Activated T-helper 2 cell treated with anti-CD3 and anti-CD28 coated beads, Interferon-gamma antibody, Interleukin-2, Interleukin-4, amounts not matched to agents 10 μg/mL and 5 μg/mL and 100 μg/mL, durations not matched to agents 14 hours and 24 hours and 36 hours (primary cell): ENCODE measurements at regions of chr2 and their contacts with region 1.

Region 1: DNA sequence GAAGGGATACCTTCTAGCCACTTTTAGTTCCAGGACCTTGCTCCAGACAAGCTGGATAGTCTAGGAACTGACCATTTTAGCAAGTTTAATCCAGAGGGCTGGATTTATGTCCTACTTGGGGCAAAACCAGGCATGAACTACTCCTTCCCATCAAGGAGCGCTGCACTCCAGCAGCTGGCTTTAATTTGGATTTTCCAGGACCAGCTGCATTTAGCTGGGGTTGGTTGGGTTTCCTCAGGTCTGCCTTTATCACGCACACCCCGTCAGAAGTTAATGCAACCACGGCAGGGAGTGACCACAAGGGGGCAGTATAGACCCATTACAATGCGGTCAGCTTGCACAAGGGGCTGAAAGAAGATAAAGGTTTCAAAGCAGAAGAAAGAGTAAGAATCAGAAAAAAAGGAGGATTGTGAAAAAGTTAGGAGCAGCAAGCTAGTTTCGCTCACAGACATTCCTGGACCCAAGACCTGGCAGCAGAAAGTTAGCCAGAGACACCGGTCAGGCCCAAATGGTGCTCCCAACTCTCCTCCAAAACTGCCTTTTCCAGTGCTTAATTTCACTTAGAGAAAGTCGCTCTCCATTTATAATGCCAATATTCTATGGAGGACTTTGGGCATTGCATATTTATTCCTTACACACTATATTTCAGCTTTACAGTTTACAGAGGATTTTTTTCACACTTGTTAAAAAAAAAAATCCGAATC is 40.1 kb downstream of the SLC4A1AP start:
- DNase-seq: peak; percentile 77
- H3K4me3 Mint-ChIP-seq: no peak overlapping the region
- H3K27ac Mint-ChIP-seq: no peak overlapping the region
- H3K4me1 Mint-ChIP-seq: peaks cover 25% of the 10 kb centered on the region
- H3K27me3 Mint-ChIP-seq: no peaks in the 10 kb centered on the region

Region 2: DNA sequence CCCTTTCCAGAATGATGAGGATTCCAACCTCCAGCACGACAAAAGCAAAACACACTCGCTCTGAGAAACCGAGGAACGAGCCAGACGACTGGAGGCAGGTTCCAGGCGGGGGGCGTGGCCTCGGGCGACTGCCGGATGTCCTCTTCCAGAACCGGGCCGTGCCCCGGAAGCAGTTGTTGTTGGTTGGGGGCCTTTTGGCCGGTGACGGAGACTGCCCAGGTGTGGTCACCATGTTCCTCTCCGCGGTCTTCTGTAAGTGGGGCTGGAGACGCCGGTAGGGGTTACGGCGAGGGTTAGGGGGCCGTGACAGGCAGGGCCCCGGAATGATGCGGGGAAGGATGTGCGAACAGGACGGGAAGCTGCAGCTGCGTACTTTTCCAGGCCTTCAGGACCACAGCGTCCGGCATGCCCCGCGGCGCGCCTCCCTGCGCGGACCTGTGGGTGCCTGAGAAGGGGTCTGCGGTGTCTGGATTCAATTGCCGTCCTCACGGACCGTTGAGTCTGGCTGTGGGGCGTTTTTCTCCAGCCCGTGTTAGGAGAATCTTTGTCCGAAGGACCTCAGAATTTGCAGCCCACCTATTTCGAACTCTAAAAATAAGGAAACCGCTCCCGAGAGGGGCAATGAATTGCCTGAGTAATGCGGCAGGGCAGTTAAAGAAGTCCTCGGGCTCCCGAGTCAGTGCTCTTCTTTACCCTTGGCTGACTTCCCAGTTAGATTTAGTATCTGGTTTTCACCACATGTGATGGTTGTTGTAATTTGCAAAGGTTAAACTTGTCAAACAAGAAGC is 68.0 kb after region 1 on chr2 and contains the start of gene MRPL33:
- intact Hi-C with region 1: loop called (anchors 5 kb)
- DNase-seq: peak; percentile 85
- H3K4me3 Mint-ChIP-seq: peak within 1 kb of the TSS; percentile 95
- H3K27ac Mint-ChIP-seq: peak within 1 kb of the TSS; percentile 92
- H3K4me1 Mint-ChIP-seq: peaks cover 28% of the 10 kb centered on the region
- H3K27me3 Mint-ChIP-seq: no peaks in the 10 kb centered on the region
- total RNA-seq, gene MRPL33: 57.7 and 58.9 TPM in 2 replicates

Region 3: DNA sequence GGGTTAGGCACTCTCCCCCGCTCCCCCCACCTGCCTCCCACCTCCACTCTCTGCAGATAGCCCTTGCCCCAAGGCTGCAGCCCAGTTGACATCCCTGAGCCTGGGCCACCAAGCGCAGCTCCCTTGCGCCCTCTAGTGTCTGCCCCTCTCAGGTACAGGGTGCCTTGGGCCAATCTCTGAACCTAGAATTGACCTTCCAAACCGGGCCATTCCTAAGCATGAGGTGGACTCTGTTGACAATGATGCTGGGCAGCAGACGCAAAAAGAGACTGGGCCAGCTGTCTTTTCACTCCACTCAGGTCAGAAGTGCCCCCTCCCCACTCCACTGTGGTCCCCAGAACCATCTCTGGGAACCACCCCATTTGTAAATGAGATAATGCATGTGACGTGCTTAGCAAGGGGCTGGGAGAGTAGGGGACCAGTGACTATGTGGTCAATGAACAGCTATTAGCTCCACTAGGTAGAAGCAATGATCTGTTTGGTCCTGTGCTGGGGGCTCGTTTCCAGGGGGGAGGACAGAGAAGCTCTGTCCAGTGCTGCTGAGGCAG is 748.8 kb after region 1 on chr2:
- intact Hi-C with region 1: loop called (anchors 2 kb)
- DNase-seq: peak; percentile 65
- H3K4me3 Mint-ChIP-seq: no peak overlapping the region
- H3K27ac Mint-ChIP-seq: peak overlapping the region; percentile 30
- H3K4me1 Mint-ChIP-seq: peaks cover 48% of the 10 kb centered on the region
- H3K27me3 Mint-ChIP-seq: no peaks in the 10 kb centered on the region